CD8-positive, alpha-beta T cell (primary cell): ENCODE measurements at regions of chr4 and their contacts with region 1.

Region 1: GRCh38 chr4:97923096-97923495 is 220.2 kb downstream of the STPG2 start:
- DNase-seq: no peak
- ATAC-seq: no peak
- H3K4me3 ChIP-seq: no peak overlapping the region
- H3K4me3 Mint-ChIP-seq: no peak overlapping the region
- H3K27ac ChIP-seq: no peak overlapping the region
- H3K27ac Mint-ChIP-seq: no peak overlapping the region
- H3K4me1 ChIP-seq: no peaks in the 10 kb centered on the region
- H3K4me1 Mint-ChIP-seq: no peaks in the 10 kb centered on the region
- H3K27me3 ChIP-seq: no peaks in the 10 kb centered on the region
- H3K27me3 Mint-ChIP-seq: no peaks in the 10 kb centered on the region
- CTCF ChIP-seq: no peak

Region 2: GRCh38 chr4:98352396-98352795 is 429.3 kb after region 1 on chr4:
- CTCF ChIA-PET with region 1: no interaction called
- POLR2A ChIA-PET with region 1: no interaction called
- intact Hi-C with region 1: no loop called
- DNase-seq: no peak
- ATAC-seq: no peak
- H3K4me3 ChIP-seq: no peak overlapping the region
- H3K4me3 Mint-ChIP-seq: no peak overlapping the region
- H3K27ac ChIP-seq: no peak overlapping the region
- H3K27ac Mint-ChIP-seq: no peak overlapping the region
- H3K4me1 ChIP-seq: no peaks in the 10 kb centered on the region
- H3K4me1 Mint-ChIP-seq: peaks cover 12% of the 10 kb centered on the region
- H3K27me3 ChIP-seq: no peaks in the 10 kb centered on the region
- H3K27me3 Mint-ChIP-seq: no peaks in the 10 kb centered on the region
- CTCF ChIP-seq: no peak

Region 3: DNA sequence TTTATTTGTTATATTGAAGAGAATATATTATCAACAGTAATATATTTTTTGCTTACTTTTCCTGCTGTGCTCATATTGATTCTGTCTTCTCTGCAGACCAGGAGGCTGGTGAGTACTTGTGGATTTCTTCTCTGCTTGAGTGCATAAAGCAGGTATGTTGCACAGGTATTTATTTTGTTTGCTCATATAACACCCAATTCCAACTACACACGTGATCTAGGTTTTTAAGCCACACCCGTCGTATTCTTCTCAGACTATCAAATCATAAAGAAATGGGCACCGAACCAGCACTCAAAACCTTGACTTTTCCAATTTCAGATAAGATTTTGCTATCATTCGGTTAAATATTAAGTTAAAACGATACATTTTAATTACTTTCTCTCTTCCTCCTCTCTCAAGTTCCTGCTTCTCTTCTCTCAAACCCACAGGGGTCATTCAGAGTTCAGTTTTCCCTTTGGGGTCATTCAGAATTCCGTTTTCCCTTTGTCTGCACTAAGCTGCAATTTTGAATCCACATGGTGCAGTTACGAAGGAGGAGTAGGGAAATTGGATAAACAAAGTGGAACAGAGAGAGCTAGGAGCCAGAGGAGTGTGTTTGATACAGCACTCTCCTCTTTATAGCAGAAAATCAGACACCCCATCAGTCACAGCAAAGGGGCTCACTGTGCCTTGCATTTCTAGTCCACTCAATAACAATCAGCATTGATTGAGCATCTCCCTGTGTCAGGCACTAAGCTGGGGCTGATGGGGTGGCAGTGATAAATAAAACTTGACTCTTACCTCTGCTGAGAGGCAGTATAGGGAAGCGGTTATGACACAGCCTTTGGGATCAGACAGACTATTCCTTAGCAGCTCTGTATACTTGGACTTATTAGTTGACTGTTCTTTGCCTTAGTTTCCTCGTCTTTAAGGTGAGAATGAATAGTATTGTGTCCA is 1429.8 kb after region 1 on chr4 and contains the start of gene ADH1C:
- CTCF ChIA-PET with region 1: no interaction called
- POLR2A ChIA-PET with region 1: no interaction called
- intact Hi-C with region 1: loop called in 1 of 2 experiments (anchors 5 kb)
- DNase-seq: no peak
- ATAC-seq: no peak
- H3K4me3 ChIP-seq: no peak within 1 kb of the TSS
- H3K4me3 Mint-ChIP-seq: no peak within 1 kb of the TSS
- H3K27ac ChIP-seq: no peak within 1 kb of the TSS
- H3K27ac Mint-ChIP-seq: no peak within 1 kb of the TSS
- H3K4me1 ChIP-seq: no peaks in the 10 kb centered on the region
- H3K4me1 Mint-ChIP-seq: no peaks in the 10 kb centered on the region
- H3K27me3 ChIP-seq: peaks cover 0 to 4% of the 10 kb centered on the region in 2 experiments
- H3K27me3 Mint-ChIP-seq: peaks cover 9% of the 10 kb centered on the region
- CTCF ChIP-seq: no peak
- total RNA-seq, gene ADH1C: not detected